ENCODE measurements at regions of chr7 and their contacts with region 1.

Region 1: GRCh38 chr7:142557971-142558582 is 191.2 kb upstream of the PRSS1 start:
- DNase-seq: peak; percentile 24 to 56 (median 42)
- ATAC-seq: peak; percentile 87
- H3K4me3 ChIP-seq: no peak overlapping the region
- H3K4me3 Mint-ChIP-seq: peak overlapping the region; percentile 18 to 73 (median 59)
- H3K27ac ChIP-seq: no peak overlapping the region
- H3K27ac Mint-ChIP-seq: peak overlapping the region in 4 of 9 donors; percentile 6 to 73 (median 48)
- H3K4me1 ChIP-seq: no peaks in the 10 kb centered on the region
- H3K4me1 Mint-ChIP-seq: peaks cover 0 to 26% (median 5%) of the 10 kb centered on the region in 7 donors
- H3K27me3 ChIP-seq: no peaks in the 10 kb centered on the region
- H3K27me3 Mint-ChIP-seq: peaks cover 0 to 24% (median 4%) of the 10 kb centered on the region in 5 donors

Region 2: DNA sequence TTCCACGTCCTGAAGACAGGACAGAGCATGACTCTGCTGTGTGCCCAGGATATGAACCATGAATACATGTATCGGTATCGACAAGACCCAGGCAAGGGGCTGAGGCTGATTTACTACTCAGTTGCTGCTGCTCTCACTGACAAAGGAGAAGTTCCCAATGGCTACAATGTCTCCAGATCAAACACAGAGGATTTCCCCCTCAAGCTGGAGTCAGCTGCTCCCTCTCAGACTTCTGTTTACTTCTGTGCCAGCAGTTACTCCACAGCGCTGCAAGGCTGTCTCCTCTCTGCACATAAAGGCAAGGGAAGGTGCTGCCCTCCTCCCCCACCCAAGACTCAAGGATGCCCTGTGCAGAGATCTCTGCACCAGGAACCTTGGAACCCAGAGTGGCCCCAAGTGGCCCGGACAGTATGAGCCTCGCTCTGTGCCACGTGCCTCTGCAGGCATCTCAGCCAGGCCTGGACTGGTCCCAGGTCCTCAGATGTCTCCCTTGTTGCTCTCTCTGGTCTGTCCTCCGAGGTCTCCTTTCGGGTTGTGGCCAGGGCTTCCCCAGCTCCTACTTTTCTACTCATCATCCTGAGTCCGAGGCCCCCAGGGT is 69.9 kb before region 1 on chr7:
- CTCF ChIA-PET with region 1: no interaction called
- POLR2A ChIA-PET with region 1: no interaction called
- intact Hi-C with region 1: no loop called
- DNase-seq: no peak
- ATAC-seq: no peak
- H3K4me3 ChIP-seq: no peak overlapping the region
- H3K4me3 Mint-ChIP-seq: no peak overlapping the region
- H3K27ac ChIP-seq: no peak overlapping the region
- H3K27ac Mint-ChIP-seq: peak overlapping the region in 4 of 9 donors; percentile 61 to 78 (median 68)
- H3K4me1 ChIP-seq: peaks cover 0 to 11% of the 10 kb centered on the region in 2 donors
- H3K4me1 Mint-ChIP-seq: peaks cover 11 to 75% (median 57%) of the 10 kb centered on the region in 7 donors
- H3K27me3 ChIP-seq: no peaks in the 10 kb centered on the region
- H3K27me3 Mint-ChIP-seq: peaks cover 0 to 5% (median 0%) of the 10 kb centered on the region in 5 donors

Region 3: DNA sequence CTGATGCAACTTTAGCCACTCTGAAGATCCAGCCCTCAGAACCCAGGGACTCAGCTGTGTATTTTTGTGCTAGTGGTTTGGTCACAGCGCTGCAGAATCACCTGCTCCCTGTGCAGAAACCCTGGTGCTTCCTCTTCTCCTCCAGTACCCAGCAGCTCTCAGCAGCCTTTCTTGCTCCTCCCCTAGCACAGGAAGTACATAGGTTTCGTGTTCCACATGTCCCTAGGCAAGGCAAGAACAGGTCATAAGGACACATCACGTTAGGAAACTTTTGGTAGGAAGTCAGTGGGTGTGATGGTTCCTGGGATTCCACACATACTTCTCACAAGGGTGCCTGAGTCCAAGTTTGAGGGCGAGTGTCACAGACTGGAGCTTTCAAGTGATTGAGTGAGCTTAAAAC is 23.3 kb after region 1 on chr7:
- CTCF ChIA-PET with region 1: no interaction called
- POLR2A ChIA-PET with region 1: no interaction called
- intact Hi-C with region 1: loop called in 1 of 2 experiments (anchors 2 kb)
- DNase-seq: peak in 6 of 9 donors; percentile 10 to 49 (median 34)
- ATAC-seq: peak; percentile 82
- H3K4me3 ChIP-seq: no peak overlapping the region
- H3K4me3 Mint-ChIP-seq: peak overlapping the region; percentile 8 to 82 (median 62)
- H3K27ac ChIP-seq: no peak overlapping the region
- H3K27ac Mint-ChIP-seq: peak overlapping the region; percentile 12 to 87 (median 71)
- H3K4me1 ChIP-seq: peaks cover 0 to 14% of the 10 kb centered on the region in 2 donors
- H3K4me1 Mint-ChIP-seq: peaks cover 5 to 43% (median 26%) of the 10 kb centered on the region in 7 donors
- H3K27me3 ChIP-seq: no peaks in the 10 kb centered on the region
- H3K27me3 Mint-ChIP-seq: no peaks in the 10 kb centered on the region

Measured in naive thymus-derived CD4-positive, alpha-beta T cell (primary cell).